Activated naive CD4-positive, alpha-beta T cell treated with anti-CD3 and anti-CD28 coated beads for 36 hours (primary cell): ENCODE measurements at regions of chr17 and their contacts with region 1.

Region 1: GRCh38 chr17:77404812-77405581 is 264.2 kb downstream of the SEC14L1 start:
- DNase-seq: peak; percentile 95
- H3K4me3 Mint-ChIP-seq: peak overlapping the region; percentile 79
- H3K27ac Mint-ChIP-seq: peak overlapping the region; percentile 90
- H3K4me1 Mint-ChIP-seq: peaks cover 92% of the 10 kb centered on the region
- H3K27me3 Mint-ChIP-seq: no peaks in the 10 kb centered on the region

Region 2: GRCh38 chr17:76597728-76598474 is 807.1 kb before region 1 on chr17:
- CTCF ChIA-PET with region 1: no interaction called
- intact Hi-C with region 1: no loop called
- DNase-seq: no peak
- H3K4me3 Mint-ChIP-seq: no peak overlapping the region
- H3K27ac Mint-ChIP-seq: no peak overlapping the region
- H3K4me1 Mint-ChIP-seq: peaks cover 13% of the 10 kb centered on the region
- H3K27me3 Mint-ChIP-seq: no peaks in the 10 kb centered on the region

Region 3: DNA sequence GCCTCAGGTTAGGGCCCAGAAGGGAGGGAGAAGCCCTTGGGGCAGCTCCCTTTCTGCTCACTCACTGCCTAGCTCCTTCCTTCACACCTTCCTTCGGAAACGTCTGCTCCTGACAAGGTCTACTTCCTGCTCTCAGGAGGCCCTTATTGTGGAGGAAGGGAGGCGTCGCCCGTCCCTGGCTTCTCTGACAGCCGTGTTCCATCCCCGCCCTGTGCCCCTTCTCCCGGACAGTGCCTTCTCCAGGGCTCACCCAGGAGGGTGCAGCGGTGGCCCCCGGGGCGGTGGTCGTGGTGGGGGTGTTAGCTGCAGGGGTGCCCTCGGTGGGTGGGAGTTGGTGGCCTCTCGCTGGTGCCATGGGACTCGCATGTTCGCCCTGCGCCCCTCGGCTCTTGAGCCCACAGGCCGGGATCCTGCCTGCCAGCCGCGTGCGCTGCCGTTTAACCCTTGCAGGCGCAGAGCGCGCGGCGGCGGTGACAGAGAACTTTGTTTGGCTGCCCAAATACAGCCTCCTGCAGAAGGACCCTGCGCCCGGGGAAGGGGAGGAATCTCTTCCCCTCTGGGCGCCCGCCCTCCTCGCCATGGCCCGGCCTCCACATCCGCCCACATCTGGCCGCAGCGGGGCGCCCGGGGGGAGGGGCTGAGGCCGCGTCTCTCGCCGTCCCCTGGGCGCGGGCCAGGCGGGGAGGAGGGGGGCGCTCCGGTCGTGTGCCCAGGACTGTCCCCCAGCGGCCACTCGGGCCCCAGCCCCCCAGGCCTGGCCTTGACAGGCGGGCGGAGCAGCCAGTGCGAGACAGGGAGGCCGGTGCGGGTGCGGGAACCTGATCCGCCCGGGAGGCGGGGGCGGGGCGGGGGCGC is 32.3 kb before region 1 on chr17:
- CTCF ChIA-PET with region 1: interaction called, 24 read pairs
- intact Hi-C with region 1: no loop called
- DNase-seq: peak; percentile 65
- H3K4me3 Mint-ChIP-seq: peak overlapping the region; percentile 67
- H3K27ac Mint-ChIP-seq: no peak overlapping the region
- H3K4me1 Mint-ChIP-seq: peaks cover 65% of the 10 kb centered on the region
- H3K27me3 Mint-ChIP-seq: no peaks in the 10 kb centered on the region

Region 4: DNA sequence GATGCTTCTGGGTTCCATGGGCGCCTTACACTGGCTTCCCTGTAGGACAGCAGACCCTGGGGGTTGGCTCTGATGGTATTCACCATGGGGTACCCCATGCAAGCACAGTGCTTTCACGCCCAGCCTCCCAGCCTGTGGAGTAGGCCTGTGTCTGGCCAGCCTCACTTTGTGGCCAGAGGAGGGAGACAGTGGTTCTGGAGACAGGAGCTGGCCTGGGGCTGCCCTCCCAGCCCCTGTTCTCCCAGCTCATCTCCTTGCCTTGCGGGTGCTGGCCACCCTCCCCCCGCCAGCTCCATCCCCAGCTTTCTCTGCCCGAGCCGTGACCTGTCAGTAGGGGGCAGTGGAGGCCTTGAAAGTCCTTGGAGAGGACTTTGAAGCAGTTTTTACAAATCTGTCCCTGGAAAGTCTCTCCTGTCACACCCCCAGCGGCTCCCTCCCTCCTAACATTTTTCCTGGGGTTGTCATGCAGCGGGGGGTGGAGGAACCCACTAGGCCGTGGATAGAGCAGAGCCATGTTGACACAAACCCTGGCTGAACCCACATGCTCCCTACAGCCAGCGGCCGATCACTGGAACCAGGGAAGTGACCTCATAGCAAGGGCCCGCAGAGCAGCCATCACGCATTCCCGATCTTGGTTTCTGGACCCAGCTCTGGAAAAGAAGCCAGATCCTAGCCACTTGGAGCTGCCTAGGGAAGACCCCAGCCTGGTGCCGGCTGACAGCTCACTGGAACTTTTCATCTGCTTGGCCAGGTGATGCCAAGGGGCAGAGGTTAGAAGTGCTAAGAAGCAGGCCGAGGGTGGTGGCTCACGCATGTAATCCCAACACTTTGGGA is 25.1 kb after region 1 on chr17:
- CTCF ChIA-PET with region 1: interaction called, 32 read pairs
- intact Hi-C with region 1: no loop called
- DNase-seq: peak; percentile 94
- H3K4me3 Mint-ChIP-seq: no peak overlapping the region
- H3K27ac Mint-ChIP-seq: peak overlapping the region; percentile 41
- H3K4me1 Mint-ChIP-seq: peaks cover 92% of the 10 kb centered on the region
- H3K27me3 Mint-ChIP-seq: no peaks in the 10 kb centered on the region

Region 5: GRCh38 chr17:77465358-77466041 is 60.5 kb after region 1 on chr17:
- CTCF ChIA-PET with region 1: interaction called, 14 read pairs
- intact Hi-C with region 1: loop called (anchors 2 kb)
- DNase-seq: peak; percentile 92
- H3K4me3 Mint-ChIP-seq: peak overlapping the region; percentile 62
- H3K27ac Mint-ChIP-seq: peak overlapping the region; percentile 93
- H3K4me1 Mint-ChIP-seq: peaks cover 86% of the 10 kb centered on the region
- H3K27me3 Mint-ChIP-seq: no peaks in the 10 kb centered on the region

Region 6: DNA sequence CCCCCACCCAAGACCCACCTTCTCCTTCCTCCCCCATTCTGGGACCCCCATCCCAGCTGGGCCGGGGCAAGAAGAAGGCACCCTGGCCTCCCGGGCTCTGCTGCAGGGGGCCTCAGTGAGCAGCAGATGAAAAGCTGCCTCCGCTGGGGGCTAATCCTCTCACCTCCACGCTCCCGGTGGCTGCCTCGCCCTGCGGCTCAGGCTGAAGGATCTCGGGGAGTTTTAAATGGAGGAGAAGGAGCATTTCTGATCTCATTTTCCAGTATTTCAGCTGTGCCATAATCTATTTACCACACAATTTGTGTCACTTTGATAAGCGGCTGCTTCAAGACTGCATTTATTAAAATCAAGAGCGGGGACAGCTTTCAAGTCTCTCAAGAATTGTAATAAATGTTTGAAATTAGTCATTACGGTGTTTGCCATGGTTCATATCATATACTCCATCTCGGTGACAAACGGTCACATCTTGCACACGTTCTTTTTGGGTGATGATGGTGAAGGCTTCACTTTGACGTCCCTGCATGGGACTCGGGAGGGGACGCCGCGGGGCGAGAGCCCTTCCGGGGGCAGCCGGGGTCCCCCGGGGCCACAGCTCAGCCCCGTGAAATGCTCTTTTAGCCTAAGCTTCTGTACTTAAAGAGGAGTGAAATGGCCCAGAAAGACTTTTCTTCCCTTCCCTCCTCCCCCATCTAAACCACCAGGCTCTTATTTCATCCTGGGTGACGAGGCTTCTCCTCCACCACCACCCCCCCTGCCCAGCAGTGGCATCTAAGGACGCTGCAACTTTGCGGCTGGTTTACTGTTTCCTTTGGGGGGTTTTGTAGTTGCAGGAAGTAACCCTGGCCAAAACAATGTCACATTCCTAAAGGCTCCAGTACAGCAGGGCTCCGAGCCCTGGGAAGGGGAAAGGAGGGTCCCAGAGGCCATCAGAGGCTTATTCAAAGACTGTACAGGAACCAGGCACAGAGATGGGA is 240.4 kb after region 1 on chr17:
- CTCF ChIA-PET with region 1: no interaction called
- intact Hi-C with region 1: loop called (anchors 10 kb)
- DNase-seq: peak; percentile 80
- H3K4me3 Mint-ChIP-seq: peak overlapping the region; percentile 53
- H3K27ac Mint-ChIP-seq: peak overlapping the region; percentile 85
- H3K4me1 Mint-ChIP-seq: peaks cover 26% of the 10 kb centered on the region
- H3K27me3 Mint-ChIP-seq: no peaks in the 10 kb centered on the region